ENCODE measurements at regions of chr20 and their contacts with region 1.

Region 1: DNA sequence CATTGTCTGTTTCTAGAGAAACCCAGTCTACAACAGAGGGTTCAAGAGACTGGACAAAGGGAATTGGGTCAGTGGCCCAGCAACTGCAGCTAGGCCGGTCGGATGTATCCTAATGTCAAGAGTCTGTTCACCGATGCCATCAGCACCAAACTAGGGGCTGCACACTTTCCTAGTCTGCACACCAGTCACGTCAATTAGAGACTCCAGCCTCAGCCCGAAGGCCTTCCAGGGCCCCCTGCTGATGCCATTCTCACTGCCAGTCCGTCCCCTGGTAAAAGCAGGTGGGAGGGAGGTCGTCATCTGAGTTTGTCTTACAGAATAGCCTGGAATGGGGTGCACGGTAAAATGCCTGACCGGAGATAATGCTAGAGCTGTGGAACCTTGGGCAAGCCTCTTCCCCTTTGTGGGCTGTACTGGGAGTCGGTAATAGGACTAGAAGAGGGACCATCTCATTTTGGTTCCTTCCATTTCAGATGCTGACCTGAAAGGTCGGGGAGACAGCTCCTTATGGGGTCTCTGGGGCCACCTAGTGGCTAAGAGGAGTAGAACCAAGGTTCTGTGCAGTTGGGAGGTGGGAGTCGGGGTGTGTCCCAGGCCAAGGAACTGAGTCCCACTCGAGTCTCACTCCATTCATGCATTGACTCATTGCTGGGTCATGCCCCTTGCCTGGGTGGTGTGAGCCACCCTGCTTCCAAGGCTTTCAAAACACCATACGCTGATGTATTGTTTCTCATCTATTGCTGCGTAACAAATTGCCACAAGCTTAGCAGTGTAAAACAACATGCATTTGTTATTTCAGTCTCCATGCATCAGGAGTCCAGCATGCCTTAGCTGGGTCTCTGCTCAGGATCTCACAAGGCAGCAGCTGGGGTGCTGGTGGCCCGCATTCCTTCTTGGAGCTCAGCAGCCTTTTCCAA is 5.1 kb downstream of the SOX12 start:
- DNase-seq: peak; percentile 79 to 88
- ATAC-seq: peak; percentile 25 to 63
- H3K4me3 ChIP-seq: no peak overlapping the region
- H3K27ac ChIP-seq: peak overlapping the region in 1 of 2 experiments; percentile 12; a peak in 1 of 6 replicates
- H3K4me1 ChIP-seq: peaks cover 32% of the 10 kb centered on the region
- CTCF ChIP-seq: peak; percentile 86
- EP300 ChIP-seq: no peak
- POLR2A ChIP-seq: no peak
- RAD21 ChIP-seq: peak; percentile 84 to 93

Region 2: GRCh38 chr20:266596-267562 is 63.6 kb before region 1 on chr20:
- CTCF ChIA-PET with region 1: interaction called, 86 read pairs
- POLR2A ChIA-PET with region 1: no interaction called
- DNase-seq: peak; percentile 91
- ATAC-seq: peak; percentile 81 to 95
- H3K4me3 ChIP-seq: peak overlapping the region; percentile 41
- H3K27ac ChIP-seq: peak overlapping the region; percentile 43 to 83; a peak in 5 of 6 replicates
- H3K4me1 ChIP-seq: no peaks in the 10 kb centered on the region
- CTCF ChIP-seq: peak; percentile 96
- EP300 ChIP-seq: no peak
- POLR2A ChIP-seq: peak; percentile 51
- RAD21 ChIP-seq: peak; percentile 94

Region 3: DNA sequence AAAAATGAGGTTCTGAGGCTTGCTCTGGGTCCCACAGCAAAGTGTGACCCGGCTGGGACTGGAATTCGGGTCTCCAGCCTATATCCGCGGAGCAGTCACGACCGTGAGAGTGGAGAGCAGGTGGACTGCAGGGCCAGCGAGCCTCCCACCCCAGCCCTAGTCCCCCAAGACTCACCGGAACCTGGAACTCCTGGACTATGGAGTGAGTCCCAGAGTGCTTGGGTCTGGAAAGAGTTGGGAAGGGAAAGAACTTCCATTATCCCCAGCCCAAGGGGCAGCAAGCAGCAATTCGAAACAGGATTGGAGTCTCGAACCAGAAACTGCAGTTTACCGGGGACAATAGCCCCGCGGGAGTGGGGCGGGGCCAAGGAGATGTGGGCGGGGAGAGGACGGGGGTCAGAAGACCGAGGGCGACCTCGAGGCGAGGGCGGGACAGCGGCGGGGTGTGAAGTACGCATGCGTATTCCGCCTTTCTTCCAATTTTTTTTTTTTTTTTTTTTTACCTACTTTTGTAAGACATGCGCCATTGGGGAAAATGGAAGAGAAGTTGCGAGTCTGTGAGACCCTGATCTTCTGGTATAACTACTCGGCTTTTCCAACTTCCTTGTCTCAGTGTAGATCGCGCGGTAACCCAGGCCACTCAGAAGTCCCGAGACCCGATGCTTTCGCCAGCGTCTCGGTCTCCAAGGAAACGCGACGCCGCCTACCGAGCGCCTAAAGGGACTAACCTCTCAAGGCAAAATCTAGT is 40.2 kb before region 1 on chr20 and contains the start of gene C20orf96:
- CTCF ChIA-PET with region 1: interaction called, 16 read pairs
- POLR2A ChIA-PET with region 1: no interaction called
- DNase-seq: peak; percentile 97 to 98
- ATAC-seq: peak; percentile 95 to 97
- H3K4me3 ChIP-seq: peak within 1 kb of the TSS; percentile 62
- H3K27ac ChIP-seq: peak within 1 kb of the TSS; percentile 79 to 85
- H3K4me1 ChIP-seq: peaks cover 10% of the 10 kb centered on the region
- CTCF ChIP-seq: peak; percentile 15; the same call in 1 of the 3 replicates
- EP300 ChIP-seq: no peak
- POLR2A ChIP-seq: peak; percentile 40
- RAD21 ChIP-seq: no peak
- polyA plus RNA-seq, gene C20orf96: 23.2 and 23.9 TPM in 2 replicates

Region 4: GRCh38 chr20:312067-312466 is 18.4 kb before region 1 on chr20:
- CTCF ChIA-PET with region 1: interaction called, 11 read pairs
- POLR2A ChIA-PET with region 1: no interaction called
- DNase-seq: no peak
- ATAC-seq: no peak
- H3K4me3 ChIP-seq: no peak overlapping the region
- H3K27ac ChIP-seq: no peak overlapping the region
- H3K4me1 ChIP-seq: peaks cover 6% of the 10 kb centered on the region
- CTCF ChIP-seq: no peak
- EP300 ChIP-seq: no peak
- POLR2A ChIP-seq: no peak
- RAD21 ChIP-seq: no peak

Region 5: DNA sequence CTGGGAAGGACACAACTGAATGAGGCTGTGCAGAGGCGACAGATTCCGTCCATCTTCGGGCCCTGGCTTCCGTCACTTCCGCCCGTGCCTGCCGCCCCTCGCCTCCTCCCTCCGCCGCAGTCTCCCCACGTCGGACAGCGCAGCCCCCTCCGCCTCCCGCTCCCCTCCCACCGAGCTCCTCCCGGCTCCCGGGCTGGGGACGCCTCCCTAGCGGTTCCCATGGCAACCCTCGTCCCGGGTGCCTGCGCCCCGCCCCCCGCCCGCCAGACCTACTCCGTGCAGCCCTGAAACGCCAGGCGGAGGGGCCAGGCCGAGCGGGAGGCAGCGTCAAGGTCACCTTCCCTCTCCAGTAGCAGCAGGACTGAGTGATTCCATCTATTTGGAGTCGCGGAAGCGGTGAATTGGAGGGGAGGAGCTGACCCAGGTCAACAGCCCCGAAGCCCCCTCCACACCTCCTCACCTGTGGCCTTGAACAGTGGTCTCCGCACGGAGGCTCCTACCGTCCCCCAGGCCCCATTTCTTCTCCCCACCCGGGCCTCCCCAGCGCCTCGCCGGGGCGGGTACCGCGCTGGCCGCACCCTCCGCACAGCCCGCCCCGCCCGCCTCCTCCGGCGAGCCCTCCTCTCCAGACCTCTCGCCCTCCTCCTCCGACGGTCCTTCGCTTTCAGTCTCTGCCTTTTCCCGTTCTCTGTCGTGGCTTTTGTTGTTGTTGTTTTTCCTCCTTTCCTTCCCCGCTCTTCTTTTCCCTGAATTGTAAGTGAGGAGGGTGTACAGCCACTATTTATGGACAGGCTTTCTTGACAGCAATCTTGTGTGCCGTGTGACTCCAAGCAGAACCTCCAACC is 17.4 kb after region 1 on chr20:
- CTCF ChIA-PET with region 1: interaction called, 77 read pairs
- POLR2A ChIA-PET with region 1: interaction called, 30 read pairs
- DNase-seq: peak; percentile 97 to 98
- ATAC-seq: peak; percentile 87 to 89
- H3K4me3 ChIP-seq: peak overlapping the region; percentile 66
- H3K27ac ChIP-seq: peak overlapping the region; percentile 82 to 93
- H3K4me1 ChIP-seq: peaks cover 15% of the 10 kb centered on the region
- CTCF ChIP-seq: no peak
- EP300 ChIP-seq: no peak
- POLR2A ChIP-seq: peak; percentile 64
- RAD21 ChIP-seq: no peak

Region 6: GRCh38 chr20:420641-421574 is 90.4 kb after region 1 on chr20:
- CTCF ChIA-PET with region 1: no interaction called
- POLR2A ChIA-PET with region 1: no interaction called
- DNase-seq: peak; percentile 63 to 70
- ATAC-seq: peak; percentile 11 to 69; a peak in 3 of 6 replicates
- H3K4me3 ChIP-seq: no peak overlapping the region
- H3K27ac ChIP-seq: peak overlapping the region in 1 of 2 experiments; percentile 59; a peak in 3 of 6 replicates
- H3K4me1 ChIP-seq: peaks cover 21% of the 10 kb centered on the region
- CTCF ChIP-seq: no peak
- EP300 ChIP-seq: no peak
- POLR2A ChIP-seq: no peak
- RAD21 ChIP-seq: no peak

Region 7: GRCh38 chr20:478949-479429 is 148.5 kb after region 1 on chr20:
- CTCF ChIA-PET with region 1: interaction called, 12 read pairs
- POLR2A ChIA-PET with region 1: no interaction called
- DNase-seq: peak; percentile 71 to 76
- ATAC-seq: peak; percentile 73 to 81
- H3K4me3 ChIP-seq: no peak overlapping the region
- H3K27ac ChIP-seq: peak overlapping the region in 1 of 2 experiments; percentile 43; a peak in 2 of 6 replicates
- H3K4me1 ChIP-seq: peaks cover 10% of the 10 kb centered on the region; the same call in 2 of the 3 replicates
- CTCF ChIP-seq: peak; percentile 86
- EP300 ChIP-seq: no peak
- POLR2A ChIP-seq: no peak
- RAD21 ChIP-seq: peak; percentile 70 to 71